ENCODE measurements at regions of chr22 and their contacts with region 1.

Region 1: DNA sequence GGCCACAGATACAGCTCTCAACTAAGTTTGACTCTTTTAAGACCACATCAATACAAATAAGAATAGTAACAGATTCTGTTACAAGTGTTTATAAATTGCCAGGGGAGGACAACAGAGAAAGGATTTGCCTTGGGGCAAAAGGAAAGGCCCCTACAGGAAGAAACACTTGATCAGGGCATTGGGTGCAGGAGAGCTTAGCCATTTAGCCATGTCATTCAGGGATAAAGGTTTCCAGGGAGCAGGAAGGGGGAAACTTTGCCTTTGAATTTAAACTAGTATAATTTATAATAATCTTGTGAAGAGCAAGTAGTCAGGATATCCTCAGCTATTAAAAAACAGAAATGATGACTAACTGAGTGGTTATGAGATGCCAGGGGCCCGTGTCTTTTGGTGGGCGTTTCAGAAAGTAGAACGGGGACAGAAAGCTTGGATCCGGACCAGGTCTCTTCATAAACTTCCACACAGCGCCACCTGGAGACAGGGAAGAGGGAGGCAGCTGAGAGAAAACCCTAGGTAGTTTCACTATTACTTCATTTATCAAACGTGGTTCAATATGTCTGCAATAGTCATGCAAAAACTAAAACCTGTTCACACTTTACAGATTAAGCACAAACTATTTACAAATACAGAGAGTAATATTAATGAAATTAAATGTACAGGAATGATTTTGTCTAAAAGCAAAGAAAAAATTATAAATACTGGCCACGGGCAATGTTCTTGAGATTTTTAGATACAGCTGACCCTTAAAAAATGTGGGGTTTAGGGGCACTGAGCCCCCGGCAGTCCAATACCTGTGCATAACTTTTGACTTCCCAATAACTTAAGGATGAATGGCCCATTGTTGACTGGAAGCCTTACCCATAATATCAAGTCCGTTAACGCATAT is 11.0 kb upstream of the SLC5A4 start:
- DNase-seq: peak; percentile 25 to 73
- ATAC-seq: peak in 6 of 8 donors; percentile 43 to 78 (median 54)
- H3K4me3 ChIP-seq: peak overlapping the region in 3 of 10 donors; percentile 2 to 27 (median 21)
- H3K27ac ChIP-seq: no peak overlapping the region
- H3K4me1 ChIP-seq: peaks cover 0 to 9% (median 0%) of the 10 kb centered on the region in 9 donors
- H3K27me3 ChIP-seq: peaks cover 0 to 3% (median 0%) of the 10 kb centered on the region in 7 donors
- CTCF ChIP-seq: peak; percentile 54 to 90 (median 86)

Region 2: GRCh38 chr22:31350410-31350863 is 915.7 kb before region 1 on chr22:
- intact Hi-C with region 1: no loop called
- DNase-seq: no peak
- ATAC-seq: no peak
- H3K4me3 ChIP-seq: no peak overlapping the region
- H3K27ac ChIP-seq: no peak overlapping the region
- H3K4me1 ChIP-seq: peaks cover 0 to 16% (median 6%) of the 10 kb centered on the region in 9 donors
- H3K27me3 ChIP-seq: peaks cover 0 to 10% (median 0%) of the 10 kb centered on the region in 7 donors
- CTCF ChIP-seq: no peak

Region 3: GRCh38 chr22:31977141-31977841 is 288.8 kb before region 1 on chr22:
- intact Hi-C with region 1: loop called in 9 of 10 experiments (anchors 1 to 10 kb)
- DNase-seq: peak; percentile 74
- ATAC-seq: peak; percentile 75 to 92 (median 86)
- H3K4me3 ChIP-seq: no peak overlapping the region
- H3K27ac ChIP-seq: no peak overlapping the region
- H3K4me1 ChIP-seq: peaks cover 0 to 6% (median 0%) of the 10 kb centered on the region in 9 donors
- H3K27me3 ChIP-seq: no peaks in the 10 kb centered on the region
- CTCF ChIP-seq: peak; percentile 42 to 72 (median 69)

Region 4: DNA sequence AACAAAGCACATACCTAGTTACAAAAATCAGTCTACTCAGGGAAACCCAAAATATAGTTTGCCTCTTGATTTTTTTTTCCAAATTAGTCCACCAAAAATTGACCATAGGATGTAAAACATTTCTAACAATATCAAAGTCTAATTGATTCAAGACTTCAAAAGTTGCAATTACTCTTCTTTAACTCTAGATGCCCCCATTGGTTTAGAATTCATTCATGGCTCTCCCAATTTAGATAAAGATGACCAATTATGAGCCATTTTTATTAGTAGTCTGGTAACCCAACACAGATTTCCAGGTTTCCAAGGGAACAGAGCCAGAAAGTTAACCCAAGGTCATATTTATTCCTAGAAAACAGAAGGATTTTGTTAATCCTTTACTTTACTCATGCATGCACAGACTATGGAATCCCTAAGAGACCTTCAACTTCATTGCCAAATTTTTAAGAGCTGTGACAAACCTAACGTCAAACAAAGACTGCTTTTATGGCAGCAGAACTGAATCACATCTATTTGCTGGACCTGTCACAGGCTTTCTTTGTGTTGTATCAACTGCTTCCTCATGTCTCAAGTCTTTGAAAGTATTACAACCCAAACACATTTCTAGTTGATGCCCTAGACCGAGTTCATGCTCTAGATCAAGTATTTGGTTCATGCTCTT is 162.3 kb before region 1 on chr22:
- intact Hi-C with region 1: loop called in 6 of 10 experiments (anchors 1 to 10 kb)
- DNase-seq: no peak
- ATAC-seq: no peak
- H3K4me3 ChIP-seq: no peak overlapping the region
- H3K27ac ChIP-seq: no peak overlapping the region
- H3K4me1 ChIP-seq: no peaks in the 10 kb centered on the region
- H3K27me3 ChIP-seq: no peaks in the 10 kb centered on the region
- CTCF ChIP-seq: peak in 7 of 9 donors; percentile 30 to 57 (median 46)

Region 5: DNA sequence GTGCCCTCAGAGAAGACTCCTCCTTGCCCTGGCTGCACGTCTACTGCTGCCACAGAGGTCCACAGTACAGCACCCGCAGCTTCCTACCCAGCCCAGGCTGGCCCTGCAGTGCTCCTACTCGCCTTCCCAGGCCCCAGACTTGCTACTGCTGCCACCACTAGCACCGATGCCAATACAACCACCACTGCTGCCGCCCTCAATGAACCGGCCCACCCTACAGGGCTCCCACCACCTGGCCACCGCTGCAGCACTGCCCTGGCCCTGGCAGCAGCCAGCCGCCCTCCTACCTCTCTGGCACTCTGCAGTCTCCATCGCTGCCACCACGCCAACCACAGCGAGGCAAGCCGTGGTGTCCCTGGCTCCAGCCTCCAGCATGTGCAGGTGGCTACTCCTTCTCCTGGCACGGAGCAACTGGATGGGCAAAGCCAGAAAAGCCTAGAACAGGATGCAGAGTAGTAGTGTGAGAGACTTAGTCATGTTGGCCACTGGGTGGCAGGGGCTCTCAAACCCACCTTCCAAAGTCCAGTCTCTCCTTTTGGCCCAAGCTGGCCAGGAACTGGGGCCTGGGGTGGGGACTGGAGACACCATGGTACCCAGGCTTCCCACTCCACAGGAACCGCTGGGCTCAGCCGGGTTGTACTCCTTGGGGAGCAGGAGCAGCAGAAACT is 146.4 kb before region 1 on chr22:
- intact Hi-C with region 1: loop called in 1 of 10 experiments (anchors 10 kb)
- DNase-seq: no peak
- ATAC-seq: peak in 4 of 8 donors; percentile 24 to 49 (median 34)
- H3K4me3 ChIP-seq: no peak overlapping the region
- H3K27ac ChIP-seq: no peak overlapping the region
- H3K4me1 ChIP-seq: no peaks in the 10 kb centered on the region
- H3K27me3 ChIP-seq: peaks cover 0 to 5% (median 0%) of the 10 kb centered on the region in 7 donors
- CTCF ChIP-seq: no peak

Region 6: DNA sequence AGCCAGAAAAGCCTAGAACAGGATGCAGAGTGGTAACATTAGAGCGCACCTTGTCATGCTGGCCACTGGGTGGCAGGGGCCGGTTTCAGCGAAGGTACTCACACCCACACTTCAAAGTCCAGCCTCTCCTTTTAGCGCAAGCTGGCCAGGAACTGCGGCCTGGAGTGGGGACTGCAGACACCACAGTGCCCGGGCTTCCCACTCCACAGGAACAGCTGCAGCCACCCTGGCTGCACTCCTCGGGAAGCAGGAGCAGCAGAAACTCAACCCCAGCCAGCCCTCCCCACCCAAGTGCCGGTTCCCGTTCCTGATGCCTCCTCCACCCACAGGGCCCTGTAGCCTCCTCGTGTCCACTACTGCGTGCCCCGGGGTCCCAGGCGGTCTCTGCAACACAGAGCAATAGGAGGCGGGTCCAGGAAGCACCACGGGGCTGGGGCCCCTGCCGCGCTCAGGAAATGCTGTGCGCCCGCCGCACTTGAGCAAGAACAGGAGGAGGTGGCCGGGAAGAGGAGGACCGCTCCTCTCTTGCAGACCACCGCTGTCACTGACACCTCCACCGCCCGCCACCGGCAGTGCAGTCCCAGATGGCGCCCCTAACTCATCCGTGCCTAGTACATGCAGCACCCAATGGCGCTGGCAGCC is 63.5 kb before region 1 on chr22:
- intact Hi-C with region 1: loop called in 1 of 10 experiments (anchors 2 kb)
- DNase-seq: peak; percentile 18 to 39
- ATAC-seq: peak; percentile 46 to 73 (median 70)
- H3K4me3 ChIP-seq: peak overlapping the region in 8 of 10 donors; percentile 9 to 40 (median 28)
- H3K27ac ChIP-seq: no peak overlapping the region
- H3K4me1 ChIP-seq: peaks cover 0 to 15% (median 9%) of the 10 kb centered on the region in 9 donors
- H3K27me3 ChIP-seq: peaks cover 0 to 48% (median 24%) of the 10 kb centered on the region in 7 donors
- CTCF ChIP-seq: peak in 8 of 9 donors; percentile 17 to 62 (median 44)

Region 7: DNA sequence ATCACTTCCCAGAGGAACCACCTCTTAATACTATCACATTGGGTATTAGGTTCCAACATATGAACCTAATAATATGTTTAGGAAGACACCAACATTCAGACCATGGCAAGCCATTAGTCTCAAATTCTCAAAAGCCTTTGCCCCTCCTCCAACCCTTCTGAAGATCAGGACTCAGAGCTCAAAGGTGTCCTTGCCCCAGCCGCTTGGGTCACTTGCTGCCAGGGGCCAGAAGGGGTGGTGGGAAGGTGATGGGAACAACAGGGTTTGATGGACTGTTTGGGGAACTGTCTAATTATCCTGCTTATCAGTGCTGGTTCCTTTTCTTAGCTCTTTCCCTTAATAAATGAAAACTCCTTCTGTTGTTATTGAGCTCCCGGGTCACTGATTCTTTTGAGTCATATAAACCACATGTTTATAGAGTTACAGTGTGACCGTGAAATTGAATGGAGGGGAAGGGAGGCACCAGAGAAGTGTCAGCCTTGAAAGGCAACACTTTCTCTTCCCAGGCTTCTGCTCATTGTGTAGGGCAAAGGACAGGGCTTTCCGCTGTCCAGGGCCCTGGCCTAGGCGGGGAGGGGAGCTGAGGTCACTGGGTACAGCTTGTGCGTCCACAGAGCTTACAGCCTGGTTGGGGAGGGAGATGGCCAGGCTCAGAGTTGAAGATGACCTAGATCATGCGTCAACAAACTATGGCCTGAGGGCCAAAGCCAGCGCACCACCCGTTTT is 313.5 kb after region 1 on chr22:
- intact Hi-C with region 1: no loop called
- DNase-seq: peak in 1 of 2 donors; percentile 61
- ATAC-seq: peak; percentile 64 to 92 (median 82)
- H3K4me3 ChIP-seq: no peak overlapping the region
- H3K27ac ChIP-seq: peak overlapping the region in 7 of 10 donors; percentile 18 to 67 (median 49)
- H3K4me1 ChIP-seq: peaks cover 0 to 30% (median 7%) of the 10 kb centered on the region in 9 donors
- H3K27me3 ChIP-seq: no peaks in the 10 kb centered on the region
- CTCF ChIP-seq: no peak

Measured in heart right ventricle (tissue), 16 donors.